SK-N-SH (cell line): ENCODE measurements at regions of chr7 and their contacts with region 1.

Region 1: GRCh38 chr7:106041140-106041717 is 70.9 kb downstream of the SYPL1 start:
- DNase-seq: peak; percentile 80
- H3K4me3 ChIP-seq: no peak overlapping the region; a peak in 1 of 4 replicates
- H3K27ac ChIP-seq: no peak overlapping the region
- H3K4me1 ChIP-seq: peaks cover 4 to 28% of the 10 kb centered on the region in 2 experiments; a peak in 2 of 4 replicates
- H3K27me3 ChIP-seq: no peaks in the 10 kb centered on the region
- CTCF ChIP-seq: peak; percentile 89
- EP300 ChIP-seq: 0 out of 4 replicates have a peak, but pooled peaks of 1 of the 2 experiments have one; percentile 18
- RAD21 ChIP-seq: peak; percentile 60

Region 2: GRCh38 chr7:105589356-105590077 is 451.7 kb before region 1 on chr7:
- CTCF ChIA-PET with region 1: interaction called, 29 read pairs
- POLR2A ChIA-PET with region 1: no interaction called
- DNase-seq: peak; percentile 88
- H3K4me3 ChIP-seq: no peak overlapping the region
- H3K27ac ChIP-seq: no peak overlapping the region
- H3K4me1 ChIP-seq: peaks cover 0 to 6% of the 10 kb centered on the region in 2 experiments; a peak in 1 of 4 replicates
- H3K27me3 ChIP-seq: no peaks in the 10 kb centered on the region
- CTCF ChIP-seq: peak; percentile 95
- EP300 ChIP-seq: no peak
- RAD21 ChIP-seq: peak; percentile 99

Region 3: DNA sequence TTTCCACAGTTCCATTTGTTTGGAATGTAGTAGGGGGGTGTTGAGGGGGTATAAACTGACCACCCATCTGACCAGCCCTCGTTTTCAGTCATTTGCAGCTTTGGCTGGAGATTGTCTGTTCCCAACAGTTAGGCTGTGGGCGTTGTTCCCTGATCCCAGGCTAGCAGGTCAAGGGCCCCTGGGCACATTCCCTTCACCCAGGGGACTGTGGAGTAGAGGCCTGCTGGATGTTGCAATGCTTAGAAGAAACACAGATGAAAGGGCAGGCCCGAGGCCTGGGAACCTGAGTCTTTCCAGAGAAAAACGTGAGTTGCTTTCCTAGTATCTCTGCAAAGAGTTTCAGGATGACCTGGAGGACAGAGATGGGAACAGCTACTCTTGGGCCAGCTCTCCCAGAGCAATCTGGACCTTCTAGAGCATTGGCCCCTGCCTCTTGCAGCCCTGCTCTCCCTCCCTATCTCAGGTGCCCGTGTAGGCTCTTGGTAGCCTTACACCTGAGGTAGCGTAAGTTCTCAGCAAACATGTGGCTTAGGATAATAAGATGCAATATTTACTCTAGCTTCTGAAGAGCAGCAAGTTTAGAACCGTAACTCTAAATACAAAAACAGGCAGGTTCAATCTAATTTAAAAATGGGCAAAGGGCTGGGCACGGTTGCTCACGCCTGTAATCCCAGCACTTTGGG is 360.6 kb before region 1 on chr7:
- CTCF ChIA-PET with region 1: interaction called, 19 read pairs
- POLR2A ChIA-PET with region 1: no interaction called
- DNase-seq: no peak
- H3K4me3 ChIP-seq: no peak overlapping the region
- H3K27ac ChIP-seq: no peak overlapping the region
- H3K4me1 ChIP-seq: peaks cover 0 to 22% of the 10 kb centered on the region in 2 experiments; a peak in 2 of 4 replicates
- H3K27me3 ChIP-seq: no peaks in the 10 kb centered on the region
- CTCF ChIP-seq: no peak
- EP300 ChIP-seq: no peak
- RAD21 ChIP-seq: no peak

Region 4: DNA sequence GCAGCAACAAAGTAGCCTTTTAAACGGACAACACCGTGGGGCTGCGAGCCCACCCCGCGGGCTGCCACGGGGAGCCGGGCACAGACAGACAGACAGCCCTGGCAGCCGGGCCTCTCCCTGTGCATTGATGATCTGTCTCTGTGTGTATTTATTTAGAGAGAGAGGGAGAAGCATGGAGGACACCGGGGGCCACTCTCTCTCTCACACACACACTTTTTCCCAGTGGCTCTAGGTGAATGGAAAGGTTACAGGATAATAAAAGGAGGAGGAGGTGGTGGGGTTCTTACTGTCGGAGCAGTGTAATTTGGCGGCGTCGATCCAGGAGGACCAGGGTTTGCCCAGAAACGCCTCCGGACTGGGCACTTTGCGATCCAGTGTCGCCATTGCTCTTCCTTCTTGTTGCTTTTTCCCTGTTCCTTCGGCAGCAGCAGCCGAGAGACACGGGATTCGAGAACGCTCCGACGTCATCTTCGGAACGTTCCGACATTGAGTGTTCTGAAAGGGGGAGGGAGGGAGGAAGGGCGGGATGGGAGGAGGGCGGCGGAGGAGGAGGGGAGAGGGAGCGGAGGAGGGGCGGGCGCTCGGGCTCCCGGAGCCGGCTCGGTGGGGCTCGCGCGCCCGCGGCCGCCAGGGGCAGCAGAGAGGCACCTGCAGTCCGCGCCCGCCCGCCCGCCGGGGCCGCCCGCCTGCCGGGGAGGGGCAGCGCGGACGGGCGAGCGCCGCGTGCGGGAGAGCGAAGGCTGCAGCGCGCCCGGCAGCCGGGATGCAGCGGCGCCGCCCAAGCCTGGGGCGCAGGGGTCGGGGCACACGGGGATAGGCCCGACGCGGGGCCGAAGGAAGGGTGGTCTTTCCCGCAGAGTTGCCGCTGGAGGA is 164.9 kb before region 1 on chr7 and contains the start of gene ATXN7L1:
- CTCF ChIA-PET with region 1: interaction called, 42 read pairs
- POLR2A ChIA-PET with region 1: interaction called, 3 read pairs
- DNase-seq: peak; percentile 98
- H3K4me3 ChIP-seq: peak within 1 kb of the TSS; percentile 86 to 90
- H3K27ac ChIP-seq: peak within 1 kb of the TSS; percentile 84 to 96
- H3K4me1 ChIP-seq: peaks cover 0 to 45% of the 10 kb centered on the region in 2 experiments; a peak in 3 of 4 replicates
- H3K27me3 ChIP-seq: no peaks in the 10 kb centered on the region
- CTCF ChIP-seq: peak; percentile 37
- EP300 ChIP-seq: peak in 1 of 2 experiments; percentile 4; a peak in 2 of 4 replicates
- RAD21 ChIP-seq: peak; percentile 36
- polyA plus RNA-seq, gene ATXN7L1: 6.0 and 6.2 TPM in 2 replicates

Region 5: DNA sequence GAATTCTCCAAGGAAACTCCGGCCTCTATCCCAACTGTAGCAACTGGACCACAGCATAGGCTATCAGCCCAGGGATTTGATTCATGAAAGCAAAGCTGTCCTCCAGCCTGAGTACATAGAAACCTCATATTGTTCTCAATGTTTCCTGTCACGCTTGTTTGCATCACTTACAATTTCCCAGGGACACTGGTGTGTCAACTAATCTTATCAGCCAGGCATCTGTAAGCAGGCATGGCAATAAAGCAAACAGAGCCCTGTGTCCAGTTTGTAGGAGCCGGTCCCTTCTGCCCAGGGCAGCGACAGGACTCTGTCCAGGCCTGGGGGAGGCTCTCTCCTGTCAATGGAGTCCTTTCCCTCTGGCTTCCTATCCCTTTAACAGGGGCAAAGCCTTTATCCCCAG is 101.1 kb before region 1 on chr7:
- CTCF ChIA-PET with region 1: interaction called, 188 read pairs
- POLR2A ChIA-PET with region 1: no interaction called
- DNase-seq: peak; percentile 76
- H3K4me3 ChIP-seq: no peak overlapping the region
- H3K27ac ChIP-seq: peak overlapping the region in 1 of 2 experiments; percentile 60; a peak in 2 of 4 replicates
- H3K4me1 ChIP-seq: peaks cover 0 to 22% of the 10 kb centered on the region in 2 experiments; a peak in 2 of 4 replicates
- H3K27me3 ChIP-seq: no peaks in the 10 kb centered on the region
- CTCF ChIP-seq: no peak
- EP300 ChIP-seq: peak in 1 of 2 experiments; percentile 95; a peak in 2 of 4 replicates
- RAD21 ChIP-seq: peak; percentile 40; the same call in 1 of the 2 replicates

Region 6: DNA sequence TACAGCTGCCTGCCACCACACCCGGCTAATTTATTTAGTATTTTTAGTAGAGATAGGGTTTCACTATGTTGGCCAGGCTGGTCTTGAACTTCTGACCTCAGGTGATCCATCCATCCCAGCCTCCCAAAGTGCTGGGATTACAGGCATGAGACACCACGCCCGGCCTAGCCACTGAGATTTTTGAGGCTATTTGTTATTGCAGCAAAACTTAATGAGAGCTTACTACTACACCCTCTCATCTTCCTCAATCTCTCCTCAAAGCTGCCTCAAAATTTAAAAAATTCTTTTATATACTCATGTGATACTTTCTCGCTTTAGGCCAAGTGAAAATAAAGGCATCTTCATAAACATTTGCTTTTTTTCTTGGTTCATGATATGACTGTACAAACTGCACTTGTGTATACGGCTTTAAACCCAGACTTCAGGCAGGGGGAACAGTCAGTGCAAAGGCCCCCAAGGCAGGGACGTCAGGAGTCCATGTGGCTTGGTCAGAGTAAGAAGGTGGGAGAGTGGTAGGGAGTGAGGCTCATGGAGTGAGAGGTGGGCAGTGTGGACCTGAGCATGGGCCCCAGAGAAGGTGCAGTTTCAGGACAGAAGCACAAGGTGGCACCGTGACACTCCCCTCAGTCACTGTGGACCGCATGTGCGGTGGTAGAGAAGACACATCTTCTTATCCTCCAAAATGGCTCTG is 15.4 kb after region 1 on chr7:
- CTCF ChIA-PET with region 1: interaction called, 57 read pairs
- POLR2A ChIA-PET with region 1: interaction called, 4 read pairs
- DNase-seq: peak; percentile 88
- H3K4me3 ChIP-seq: no peak overlapping the region
- H3K27ac ChIP-seq: peak overlapping the region in 1 of 2 experiments; percentile 96; a peak in 2 of 4 replicates
- H3K4me1 ChIP-seq: peaks cover 0 to 28% of the 10 kb centered on the region in 2 experiments; a peak in 2 of 4 replicates
- H3K27me3 ChIP-seq: no peaks in the 10 kb centered on the region
- CTCF ChIP-seq: peak; percentile 95
- EP300 ChIP-seq: 0 out of 4 replicates have a peak, but pooled peaks of 1 of the 2 experiments have one; percentile 26
- RAD21 ChIP-seq: peak; percentile 100

Region 7: GRCh38 chr7:106080300-106080987 is 39.2 kb after region 1 on chr7:
- CTCF ChIA-PET with region 1: no interaction called
- POLR2A ChIA-PET with region 1: no interaction called
- DNase-seq: no peak
- H3K4me3 ChIP-seq: no peak overlapping the region
- H3K27ac ChIP-seq: no peak overlapping the region
- H3K4me1 ChIP-seq: no peaks in the 10 kb centered on the region; a peak in 1 of 4 replicates
- H3K27me3 ChIP-seq: no peaks in the 10 kb centered on the region
- CTCF ChIP-seq: no peak
- EP300 ChIP-seq: no peak
- RAD21 ChIP-seq: no peak